Activated CD4-positive, alpha-beta T cell treated with anti-CD3 and anti-CD28 coated beads for 36 hours (primary cell): ENCODE measurements at regions of chr9 and their contacts with region 1.

Region 1: GRCh38 chr9:132584601-132585560 is 2.5 kb downstream of the BARHL1 start:
- DNase-seq: no peak
- ATAC-seq: no peak
- H3K4me3 Mint-ChIP-seq: no peak overlapping the region
- H3K27ac Mint-ChIP-seq: no peak overlapping the region
- H3K4me1 Mint-ChIP-seq: peaks cover 13% of the 10 kb centered on the region
- H3K27me3 Mint-ChIP-seq: peaks cover 56% of the 10 kb centered on the region

Region 2: GRCh38 chr9:130663258-130663976 is 1921.5 kb before region 1 on chr9:
- CTCF ChIA-PET with region 1: no interaction called
- POLR2A ChIA-PET with region 1: no interaction called
- intact Hi-C with region 1: loop called in 1 of 2 experiments (anchors 5 kb)
- DNase-seq: peak; percentile 49
- ATAC-seq: peak; percentile 60
- H3K4me3 Mint-ChIP-seq: no peak overlapping the region
- H3K27ac Mint-ChIP-seq: no peak overlapping the region
- H3K4me1 Mint-ChIP-seq: peaks cover 21% of the 10 kb centered on the region
- H3K27me3 Mint-ChIP-seq: peaks cover 58% of the 10 kb centered on the region

Region 3: DNA sequence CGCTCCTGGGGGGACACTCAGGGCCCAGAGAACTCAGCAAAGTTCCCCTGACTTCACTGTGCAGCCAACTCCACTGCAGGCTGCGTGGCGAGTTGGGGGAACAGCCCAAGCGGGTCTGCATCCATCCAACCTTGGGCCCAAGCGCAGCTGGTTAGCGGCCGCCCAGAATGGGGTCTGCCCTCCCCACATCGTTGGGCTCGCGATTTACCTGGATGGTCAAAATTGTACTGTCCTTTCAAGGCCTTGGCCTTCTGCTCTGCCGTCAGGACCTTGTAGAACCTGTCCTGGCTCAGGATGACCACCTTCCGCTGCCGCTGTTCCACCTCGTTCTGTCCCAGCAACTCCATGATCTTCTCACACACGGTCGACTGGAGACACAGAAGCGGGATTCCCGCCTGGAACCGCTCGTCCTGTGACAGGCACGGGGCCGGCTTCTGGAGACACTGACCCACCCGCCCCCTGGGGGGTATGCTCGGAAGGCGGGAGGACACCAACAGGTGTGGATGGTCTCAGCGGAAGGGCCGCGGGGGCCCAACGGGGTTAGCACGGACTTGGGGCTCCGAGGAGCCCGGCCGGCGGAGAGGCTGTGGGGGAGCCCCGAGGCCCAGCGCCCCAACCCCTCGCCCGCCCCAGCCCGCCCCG is 1054.5 kb before region 1 on chr9:
- CTCF ChIA-PET with region 1: no interaction called
- POLR2A ChIA-PET with region 1: no interaction called
- intact Hi-C with region 1: no loop called
- DNase-seq: peak; percentile 33
- ATAC-seq: peak; percentile 15
- H3K4me3 Mint-ChIP-seq: peak overlapping the region; percentile 78
- H3K27ac Mint-ChIP-seq: peak overlapping the region; percentile 69
- H3K4me1 Mint-ChIP-seq: peaks cover 25% of the 10 kb centered on the region
- H3K27me3 Mint-ChIP-seq: no peaks in the 10 kb centered on the region